ENCODE measurements at regions of chrX and their contacts with region 1.

Region 1: DNA sequence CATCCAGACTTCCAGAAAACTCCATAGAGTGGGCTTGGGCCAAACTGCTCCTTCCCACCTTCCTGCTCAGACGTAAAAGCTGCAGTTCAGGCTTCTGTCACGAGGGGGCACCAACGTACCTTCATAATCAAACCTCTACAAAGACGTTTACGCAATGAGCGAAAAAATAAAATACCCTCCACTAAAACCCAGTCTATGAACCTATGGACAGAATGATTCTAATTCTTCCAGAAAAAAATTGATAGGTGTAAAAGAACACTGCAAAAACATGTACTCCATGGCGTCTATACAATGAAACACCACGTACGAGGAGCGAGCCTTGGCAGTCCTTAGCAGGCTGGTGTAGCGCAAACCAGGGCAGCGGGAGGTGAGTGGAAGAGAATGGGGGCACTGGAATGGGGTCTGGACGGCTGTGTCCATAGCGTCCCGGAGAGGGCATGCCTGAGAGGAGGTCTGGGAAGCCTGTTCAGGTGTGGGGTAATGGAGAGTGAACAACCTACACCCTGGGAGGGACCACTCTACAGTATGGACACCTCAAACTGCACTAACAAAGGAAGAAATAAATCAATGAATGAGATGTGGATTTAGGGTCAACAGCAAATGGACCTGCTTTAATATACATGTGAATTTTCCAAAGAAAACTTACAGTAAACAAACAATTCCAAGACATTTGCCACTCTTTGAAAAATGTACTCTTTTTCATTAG is 14.4 kb upstream of the RAB40A start:
- DNase-seq: peak; percentile 69 to 91 (median 87)
- ATAC-seq: peak; percentile 73 to 80
- H3K4me3 ChIP-seq: peak overlapping the region; percentile 62
- H3K27ac ChIP-seq: peak overlapping the region; percentile 13
- H3K4me1 ChIP-seq: peaks cover 2% of the 10 kb centered on the region
- H3K27me3 ChIP-seq: no peaks in the 10 kb centered on the region

Region 2: GRCh38 chrX:103629318-103630170 is 95.9 kb after region 1 on chrX:
- intact Hi-C with region 1: loop called in 2 of 4 experiments (anchors 5 kb)
- DNase-seq: peak; percentile 69 to 85 (median 84)
- ATAC-seq: peak; percentile 95 to 96
- H3K4me3 ChIP-seq: peak overlapping the region; percentile 86
- H3K27ac ChIP-seq: peak overlapping the region; percentile 94
- H3K4me1 ChIP-seq: no peaks in the 10 kb centered on the region
- H3K27me3 ChIP-seq: no peaks in the 10 kb centered on the region

Region 3: DNA sequence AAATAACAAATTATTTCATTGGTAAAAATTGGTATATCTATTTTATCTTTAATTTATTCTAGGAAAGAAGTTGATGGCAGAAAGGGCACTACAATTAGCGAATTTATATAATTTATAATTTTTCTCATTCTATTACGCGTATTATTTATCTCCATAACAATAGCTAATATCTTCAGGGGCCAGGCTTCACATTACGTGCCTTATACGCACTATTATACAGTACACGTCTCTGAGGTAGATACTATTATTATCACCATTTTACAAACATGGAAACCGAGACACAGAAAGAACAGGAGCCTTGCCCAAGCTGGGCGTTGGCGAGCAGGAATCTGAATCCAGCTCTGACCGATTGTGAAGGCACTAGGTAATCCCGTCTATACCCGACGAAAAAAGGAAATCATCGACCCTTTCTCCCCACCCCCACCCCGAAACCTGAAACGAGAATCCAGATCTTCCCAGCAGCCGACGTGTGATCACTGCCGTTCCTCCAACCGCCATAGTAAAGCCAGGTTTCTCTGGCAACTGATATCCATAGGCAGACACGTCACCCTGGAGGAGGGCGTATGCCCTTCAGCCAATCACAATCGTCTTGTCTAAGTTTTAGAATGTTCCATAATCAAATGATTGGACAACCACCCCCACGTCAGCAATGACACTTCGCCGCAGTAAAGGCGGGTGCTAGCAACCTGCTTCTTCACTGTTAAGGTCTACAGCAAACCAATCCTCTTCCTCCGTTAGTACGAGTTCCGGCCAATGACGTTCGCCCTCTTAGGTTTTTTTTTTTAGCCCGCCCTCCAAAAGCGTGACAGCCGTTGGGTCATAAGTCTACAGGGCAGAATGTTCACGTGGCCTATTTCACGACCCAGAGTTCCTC is 152.8 kb after region 1 on chrX and contains the start of gene MORF4L2:
- intact Hi-C with region 1: loop called in 1 of 4 experiments (anchors 10 kb)
- DNase-seq: peak; percentile 90 to 94 (median 93)
- ATAC-seq: peak; percentile 95 to 96
- H3K4me3 ChIP-seq: peak within 1 kb of the TSS; percentile 90
- H3K27ac ChIP-seq: peak within 1 kb of the TSS; percentile 99
- H3K4me1 ChIP-seq: no peaks in the 10 kb centered on the region
- H3K27me3 ChIP-seq: no peaks in the 10 kb centered on the region
- total RNA-seq, gene MORF4L2: 187 to 269 (median 217) TPM

Region 4: GRCh38 chrX:103823591-103823990 is 289.9 kb after region 1 on chrX:
- intact Hi-C with region 1: loop called in 3 of 4 experiments (anchors 5 to 10 kb)
- DNase-seq: no peak
- ATAC-seq: no peak
- H3K4me3 ChIP-seq: no peak overlapping the region
- H3K27ac ChIP-seq: no peak overlapping the region
- H3K4me1 ChIP-seq: no peaks in the 10 kb centered on the region
- H3K27me3 ChIP-seq: no peaks in the 10 kb centered on the region

Region 5: DNA sequence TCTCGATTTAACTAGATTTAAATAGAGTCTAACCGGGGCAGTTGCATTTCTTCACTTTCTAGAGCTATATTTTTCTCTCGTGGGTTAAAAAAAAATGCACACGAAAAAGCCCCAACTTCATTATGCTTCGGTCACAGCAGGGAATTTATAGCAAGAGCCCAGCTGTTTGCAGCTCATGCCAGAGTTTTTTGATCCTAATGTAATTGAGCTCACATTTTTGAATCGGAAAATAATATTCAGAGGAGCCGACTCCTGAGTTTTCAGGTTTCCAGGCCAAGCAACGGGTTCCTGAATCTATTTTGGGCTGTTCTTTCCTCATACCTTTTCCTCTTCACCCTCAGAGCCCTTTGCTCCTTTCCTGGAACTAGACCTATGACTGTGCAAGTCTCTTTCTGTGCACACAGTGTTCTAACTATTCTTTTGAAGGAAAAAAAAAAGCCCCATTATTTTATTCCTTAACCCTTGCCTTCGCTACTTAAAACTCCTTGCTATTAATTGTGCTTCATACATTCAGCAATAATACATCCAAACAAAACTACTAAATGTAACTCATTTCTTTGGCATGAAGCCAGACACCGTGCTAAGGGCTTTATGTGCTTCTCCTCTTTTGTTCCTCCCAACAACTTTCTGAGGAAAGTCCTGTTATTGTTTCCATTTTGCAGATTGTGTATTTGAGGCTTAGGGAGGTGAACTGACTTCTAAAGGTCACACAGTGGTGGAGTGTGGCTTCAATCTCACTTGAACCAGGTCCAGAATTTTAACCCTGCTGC is 748.7 kb after region 1 on chrX:
- intact Hi-C with region 1: no loop called
- DNase-seq: no peak
- ATAC-seq: peak in 1 of 2 donors; percentile 82
- H3K4me3 ChIP-seq: no peak overlapping the region
- H3K27ac ChIP-seq: no peak overlapping the region
- H3K4me1 ChIP-seq: no peaks in the 10 kb centered on the region
- H3K27me3 ChIP-seq: no peaks in the 10 kb centered on the region

Measured in right cardiac atrium (tissue), 5 donors.